Panc1 (cell line): ENCODE measurements at regions of chr11 and their contacts with region 1.

Region 1: DNA sequence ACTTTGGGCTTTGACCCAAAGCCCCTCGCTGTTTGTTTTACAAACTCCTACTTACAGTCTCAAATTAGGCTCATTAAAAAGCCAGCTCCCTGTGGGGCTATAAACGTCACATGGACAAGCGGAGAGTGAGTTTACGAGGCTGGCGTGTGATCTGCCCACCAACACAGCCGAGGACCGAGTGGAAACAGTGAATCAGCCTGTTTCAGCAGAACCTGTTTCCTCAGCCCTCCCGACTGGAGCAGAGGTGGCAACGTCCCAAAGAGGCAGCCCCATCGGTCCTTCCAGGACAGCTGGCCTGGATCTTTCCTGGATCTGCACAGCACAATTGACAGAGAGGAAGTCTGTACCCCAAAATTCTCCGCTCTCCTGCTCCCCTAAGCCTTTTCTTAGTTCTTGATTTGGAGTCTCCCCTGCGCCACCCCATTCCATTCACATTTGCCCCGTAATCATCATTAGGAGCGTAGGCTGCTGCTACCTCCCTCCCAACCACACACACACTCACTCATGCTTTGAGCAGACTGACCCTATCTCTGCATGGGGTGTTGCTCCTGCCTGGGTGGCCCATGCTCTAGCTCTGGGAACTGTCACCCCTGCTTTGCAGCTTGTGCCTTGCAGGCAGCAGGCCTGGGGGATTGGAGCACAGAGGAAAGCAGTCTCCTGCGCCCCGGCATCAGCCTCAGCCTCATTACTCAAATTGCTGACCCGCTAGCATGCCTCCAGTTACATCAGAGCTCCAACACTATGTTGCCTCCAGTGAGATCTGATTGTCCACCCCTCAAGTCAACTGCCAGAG is 117.8 kb downstream of the NAT10 start:
- DNase-seq: no peak
- ATAC-seq: peak; percentile 80
- H3K4me3 ChIP-seq: peak overlapping the region in 1 of 2 experiments; percentile 6; a peak in 1 of 4 replicates
- H3K27ac ChIP-seq: peak overlapping the region; percentile 76
- H3K4me1 ChIP-seq: peaks cover 28% of the 10 kb centered on the region
- H3K27me3 ChIP-seq: no peaks in the 10 kb centered on the region
- CTCF ChIP-seq: no peak

Region 2: DNA sequence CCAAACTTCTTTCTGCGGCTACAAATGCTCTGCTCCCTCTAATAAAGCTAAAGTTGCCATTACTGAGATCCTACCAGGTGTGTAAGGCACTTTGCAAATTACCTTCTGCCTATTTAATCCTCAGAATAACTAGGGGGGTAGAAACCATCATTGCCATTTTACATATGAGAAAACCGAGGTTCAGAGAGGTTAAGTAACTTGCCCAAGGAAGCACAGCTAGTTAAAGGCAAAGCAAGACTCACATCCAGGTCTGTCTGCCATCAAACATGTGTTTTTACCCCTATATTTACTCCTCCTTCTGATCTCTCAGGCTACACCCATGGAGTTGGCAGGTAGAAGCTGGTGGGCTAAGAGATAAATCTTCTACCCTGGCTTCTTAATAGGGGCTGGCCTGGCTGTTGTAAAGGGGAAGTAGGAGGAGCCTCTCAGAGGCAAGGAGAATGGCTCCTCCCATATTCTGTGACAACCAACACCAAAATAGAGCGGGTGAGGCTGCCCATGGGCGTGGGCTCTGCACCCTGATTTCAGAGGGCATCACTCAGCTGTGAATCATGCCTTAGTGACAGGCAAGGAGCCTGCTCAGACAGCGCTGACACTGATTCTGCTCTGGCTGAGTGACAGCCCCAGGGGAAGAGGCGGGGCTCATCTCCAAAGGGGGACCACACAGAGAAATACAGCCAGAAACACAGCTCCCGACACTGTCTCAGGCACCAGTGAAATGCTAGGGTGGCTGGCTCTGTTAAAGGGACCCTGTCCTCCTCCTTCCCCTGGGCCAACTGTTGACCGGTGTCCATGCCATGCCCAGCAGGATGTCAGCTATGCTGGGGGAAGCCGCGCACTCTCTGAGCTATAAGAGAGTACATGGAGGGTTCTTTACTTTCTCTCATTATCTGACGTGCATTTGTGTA is 27.8 kb after region 1 on chr11:
- CTCF ChIA-PET with region 1: interaction called, 14 read pairs
- POLR2A ChIA-PET with region 1: no interaction called
- in situ Hi-C with region 1: no loop called
- intact Hi-C with region 1: no loop called
- DNase-seq: peak; percentile 74
- ATAC-seq: peak; percentile 82
- H3K4me3 ChIP-seq: peak overlapping the region; percentile 16 to 48; a peak in 3 of 4 replicates
- H3K27ac ChIP-seq: peak overlapping the region; percentile 54
- H3K4me1 ChIP-seq: peaks cover 63% of the 10 kb centered on the region
- H3K27me3 ChIP-seq: no peaks in the 10 kb centered on the region
- CTCF ChIP-seq: no peak